ENCODE measurements at regions of chr12 and their contacts with region 1.

Region 1: GRCh38 chr12:126952096-126953007 is 1314.6 kb upstream of the TMEM132C start:
- DNase-seq: no peak
- H3K4me3 ChIP-seq: no peak overlapping the region
- H3K27ac ChIP-seq: no peak overlapping the region
- H3K4me1 ChIP-seq: no peaks in the 10 kb centered on the region
- H3K27me3 ChIP-seq: no peaks in the 10 kb centered on the region
- CTCF ChIP-seq: no peak
- EP300 ChIP-seq: no peak
- POLR2A ChIP-seq: no peak

Region 2: DNA sequence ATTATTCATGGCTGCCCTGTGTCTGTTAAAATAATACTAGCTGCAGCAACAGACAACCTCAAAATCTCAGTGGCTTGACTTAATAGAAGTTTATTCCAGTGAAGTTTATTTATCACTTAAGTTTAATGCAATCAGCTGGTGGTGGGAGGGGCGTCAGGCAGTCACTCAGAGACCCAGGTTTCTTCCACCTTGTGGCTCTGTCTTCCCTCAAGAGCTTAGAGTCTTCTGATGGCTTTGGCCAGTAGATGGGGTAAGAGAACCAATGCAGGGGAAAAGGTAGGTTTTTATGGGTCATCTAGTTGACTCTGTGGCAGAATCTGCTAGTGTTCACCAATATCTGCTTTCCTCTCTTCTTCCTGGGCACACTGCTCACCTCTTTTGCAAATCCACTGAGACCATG is 1218.2 kb before region 1 on chr12:
- in situ Hi-C with region 1: no loop called
- intact Hi-C with region 1: loop called (anchors 5 kb)
- DNase-seq: no peak
- H3K4me3 ChIP-seq: no peak overlapping the region
- H3K27ac ChIP-seq: no peak overlapping the region
- H3K4me1 ChIP-seq: no peaks in the 10 kb centered on the region
- H3K27me3 ChIP-seq: no peaks in the 10 kb centered on the region
- CTCF ChIP-seq: no peak
- EP300 ChIP-seq: no peak
- POLR2A ChIP-seq: no peak

Region 3: GRCh38 chr12:126989532-126989931 is 37.2 kb after region 1 on chr12:
- in situ Hi-C with region 1: no loop called
- intact Hi-C with region 1: no loop called
- DNase-seq: no peak
- H3K4me3 ChIP-seq: no peak overlapping the region
- H3K27ac ChIP-seq: no peak overlapping the region
- H3K4me1 ChIP-seq: no peaks in the 10 kb centered on the region
- H3K27me3 ChIP-seq: no peaks in the 10 kb centered on the region
- CTCF ChIP-seq: no peak
- EP300 ChIP-seq: no peak
- POLR2A ChIP-seq: no peak